Mammary epithelial cell (primary cell): ENCODE measurements at regions of chr9 and their contacts with region 1.

Region 1: DNA sequence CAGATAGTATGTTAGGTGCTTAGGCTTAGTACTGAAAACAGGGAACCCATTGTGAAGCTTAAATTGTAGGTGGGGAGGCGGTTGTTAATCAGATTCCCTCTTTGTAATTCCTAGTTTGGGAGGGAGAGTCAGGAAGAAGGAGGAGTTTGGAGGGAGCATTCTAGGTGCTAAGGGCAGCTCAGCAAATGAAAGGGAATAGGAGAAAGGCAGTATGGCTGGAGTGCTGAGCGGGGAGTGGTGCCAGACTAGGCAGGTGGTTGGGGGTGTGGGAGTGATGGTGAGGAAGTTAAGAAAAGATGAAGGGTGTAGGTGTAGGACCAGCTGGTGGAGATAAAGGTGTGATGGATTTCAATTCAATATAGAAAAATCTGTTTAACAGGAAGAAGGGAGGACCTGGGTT is 11.1 kb upstream of the GARNL3 start:
- DNase-seq: no peak
- H3K4me3 ChIP-seq: no peak overlapping the region
- H3K27ac ChIP-seq: no peak overlapping the region
- H3K4me1 ChIP-seq: no peaks in the 10 kb centered on the region
- H3K27me3 ChIP-seq: no peaks in the 10 kb centered on the region
- CTCF ChIP-seq: no peak

Region 2: GRCh38 chr9:127333221-127334064 is 80.0 kb after region 1 on chr9:
- CTCF ChIA-PET with region 1: no interaction called
- dilution Hi-C with region 1: loop called (anchors 5 kb)
- in situ Hi-C with region 1: no loop called
- intact Hi-C with region 1: no loop called
- DNase-seq: no peak
- H3K4me3 ChIP-seq: no peak overlapping the region
- H3K27ac ChIP-seq: no peak overlapping the region
- H3K4me1 ChIP-seq: peaks cover 21% of the 10 kb centered on the region
- H3K27me3 ChIP-seq: no peaks in the 10 kb centered on the region
- CTCF ChIP-seq: no peak

Region 3: DNA sequence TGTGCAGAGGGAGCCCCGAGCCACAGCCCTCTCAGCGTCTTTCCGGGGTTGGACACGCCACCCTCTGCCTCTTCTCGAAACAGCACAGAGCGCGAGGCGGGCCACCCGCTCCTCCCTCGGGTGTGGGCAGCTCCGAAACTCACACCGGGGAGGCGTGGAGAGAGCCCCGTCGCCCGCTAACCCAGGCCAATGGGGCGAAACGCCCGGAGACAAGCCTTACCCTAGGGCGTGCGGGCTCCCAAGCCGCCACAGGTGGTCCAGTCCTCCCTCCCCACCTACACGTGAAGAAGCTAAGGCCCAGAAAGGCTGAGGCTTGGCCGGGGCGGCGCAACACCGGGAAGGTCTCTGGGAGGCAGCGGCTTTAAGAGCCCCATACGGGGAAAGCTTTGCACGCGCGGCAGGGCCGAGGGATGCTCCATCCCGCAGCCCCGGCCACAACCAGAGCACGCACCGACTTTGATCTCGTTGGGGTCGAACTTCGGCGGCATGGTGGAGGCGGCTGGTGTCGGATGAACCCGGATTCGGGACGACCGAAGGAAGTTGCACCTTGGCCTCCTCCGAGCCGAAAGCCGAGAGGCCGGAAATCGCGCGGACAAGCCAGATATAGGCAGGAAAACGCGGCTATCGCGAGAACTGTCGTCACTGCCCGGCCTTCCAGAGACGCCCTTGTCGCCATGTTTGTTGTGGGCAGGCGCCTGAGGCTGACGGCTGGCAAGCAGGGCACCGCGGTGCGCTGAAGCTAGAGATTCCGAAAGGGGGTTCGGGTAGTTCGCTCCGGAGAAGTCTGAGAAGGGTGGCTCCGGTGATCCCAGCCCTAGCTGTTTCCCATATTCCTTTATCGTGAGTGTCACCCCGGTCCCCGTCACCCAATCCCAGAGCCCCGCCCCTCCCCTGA is 197.6 kb after region 1 on chr9 and contains the starts of genes LRSAM1 and RPL12:
- CTCF ChIA-PET with region 1: no interaction called
- dilution Hi-C with region 1: no loop called
- in situ Hi-C with region 1: no loop called
- intact Hi-C with region 1: no loop called
- DNase-seq: peak; percentile 90
- H3K4me3 ChIP-seq: peak within 1 kb of the TSS; percentile 79 to 91 (median 90)
- H3K27ac ChIP-seq: peak within 1 kb of the TSS; percentile 80
- H3K4me1 ChIP-seq: peaks cover 26% of the 10 kb centered on the region
- H3K27me3 ChIP-seq: no peaks in the 10 kb centered on the region
- CTCF ChIP-seq: peak in 1 of 2 donors; percentile 3
- total RNA-seq, gene LRSAM1: 15.5 to 20.6 TPM
- total RNA-seq, gene RPL12: 1,316 to 1,441 TPM